Prostate gland (tissue), 2 donors: ENCODE measurements at regions of chr9 and their contacts with region 1.

Region 1: DNA sequence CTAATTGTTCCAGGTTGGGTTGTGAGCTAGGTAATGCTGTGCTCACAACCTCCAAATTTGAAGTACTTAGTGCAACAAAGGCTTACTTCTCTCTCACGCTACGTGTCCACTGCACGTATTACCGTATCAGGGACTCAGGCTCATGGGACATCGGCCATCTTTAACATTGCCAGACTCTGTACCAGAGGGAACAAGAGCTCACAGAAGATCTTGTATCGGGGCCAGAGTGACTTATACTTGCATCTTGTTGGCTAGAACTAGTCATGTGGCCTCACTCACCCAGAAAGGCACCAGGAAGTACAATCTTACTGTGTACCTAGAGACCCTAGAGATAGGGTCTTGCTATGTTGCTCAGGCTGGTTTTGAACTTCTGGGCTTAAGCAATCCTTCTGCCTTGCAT is 81.1 kb upstream of the KLF9 start:
- DNase-seq: no peak
- H3K4me3 ChIP-seq: no peak overlapping the region
- H3K27ac ChIP-seq: no peak overlapping the region
- H3K4me1 ChIP-seq: no peaks in the 10 kb centered on the region
- H3K27me3 ChIP-seq: no peaks in the 10 kb centered on the region
- CTCF ChIP-seq: no peak
- POLR2A ChIP-seq: no peak

Region 2: DNA sequence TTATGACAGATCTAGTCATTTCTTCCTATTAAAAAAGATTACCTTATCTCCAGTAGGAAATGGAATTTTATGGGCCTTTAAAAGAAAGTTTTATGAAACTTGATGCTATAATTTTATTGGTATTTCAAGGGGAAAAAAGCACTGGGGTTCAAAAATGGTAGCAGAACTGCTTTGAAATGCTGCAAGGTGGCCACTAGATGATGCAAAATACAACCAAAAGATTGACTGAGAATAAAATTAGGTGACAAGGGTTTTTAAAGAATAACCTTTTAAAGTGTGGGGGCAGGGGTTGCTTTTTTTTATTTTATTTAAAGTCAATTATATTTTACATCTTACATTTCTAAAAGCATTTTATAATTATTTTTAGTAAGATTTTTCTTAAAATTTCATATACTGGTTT is 142.7 kb before region 1 on chr9:
- intact Hi-C with region 1: loop called (anchors 5 kb)
- DNase-seq: no peak
- H3K4me3 ChIP-seq: no peak overlapping the region
- H3K27ac ChIP-seq: no peak overlapping the region
- H3K4me1 ChIP-seq: no peaks in the 10 kb centered on the region
- H3K27me3 ChIP-seq: no peaks in the 10 kb centered on the region
- CTCF ChIP-seq: peak in 3 of 4 experiments; percentile 51 to 76 (median 63)
- POLR2A ChIP-seq: no peak

Region 3: DNA sequence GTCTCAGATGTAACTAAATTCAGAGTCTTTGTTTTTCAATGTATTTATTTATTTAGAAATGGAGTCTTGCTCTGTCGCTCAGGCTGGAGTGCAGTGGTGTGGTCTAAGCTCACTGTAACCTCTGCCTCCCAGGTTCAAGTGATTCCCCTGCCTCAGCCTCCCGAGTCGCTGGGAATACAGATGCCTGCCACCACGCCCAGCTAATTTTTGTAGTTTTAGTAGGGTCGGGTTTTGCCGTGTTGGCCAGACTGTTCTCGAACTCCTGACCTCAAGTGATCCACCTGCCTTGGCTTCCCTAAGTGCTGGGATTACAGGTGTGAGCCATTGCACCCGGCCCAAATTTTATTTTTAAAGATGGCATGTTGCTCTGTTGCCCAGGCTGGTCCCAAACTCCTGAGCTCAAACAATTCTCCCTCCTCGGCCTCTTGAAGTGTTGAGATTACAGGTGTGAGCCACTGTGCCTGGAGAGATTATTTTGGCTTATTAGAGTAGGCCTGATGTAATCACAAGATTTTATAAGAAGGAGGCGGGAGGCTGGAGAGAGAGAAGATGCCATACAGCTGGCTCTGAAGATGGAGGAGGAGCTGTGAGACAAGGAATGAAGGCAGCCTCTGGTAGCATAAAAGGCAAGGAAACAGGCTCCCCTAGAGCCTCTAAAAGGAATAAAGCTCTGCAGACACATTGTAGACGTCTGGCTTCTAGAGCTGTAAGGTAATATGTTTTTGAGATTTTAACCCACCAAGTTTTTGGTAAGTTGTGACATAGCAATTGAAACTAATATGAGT is 68.2 kb before region 1 on chr9:
- intact Hi-C with region 1: no loop called
- DNase-seq: peak; percentile 56
- H3K4me3 ChIP-seq: no peak overlapping the region
- H3K27ac ChIP-seq: peak overlapping the region in 1 of 2 donors; percentile 48
- H3K4me1 ChIP-seq: no peaks in the 10 kb centered on the region
- H3K27me3 ChIP-seq: no peaks in the 10 kb centered on the region
- CTCF ChIP-seq: peak in 2 of 4 experiments; percentile 18 to 34
- POLR2A ChIP-seq: no peak

Region 4: GRCh38 chr9:70578720-70579119 is 83.2 kb after region 1 on chr9:
- intact Hi-C with region 1: loop called (anchors 5 kb)
- DNase-seq: no peak
- H3K4me3 ChIP-seq: no peak overlapping the region
- H3K27ac ChIP-seq: no peak overlapping the region
- H3K4me1 ChIP-seq: no peaks in the 10 kb centered on the region
- H3K27me3 ChIP-seq: no peaks in the 10 kb centered on the region
- CTCF ChIP-seq: no peak
- POLR2A ChIP-seq: no peak

Region 5: DNA sequence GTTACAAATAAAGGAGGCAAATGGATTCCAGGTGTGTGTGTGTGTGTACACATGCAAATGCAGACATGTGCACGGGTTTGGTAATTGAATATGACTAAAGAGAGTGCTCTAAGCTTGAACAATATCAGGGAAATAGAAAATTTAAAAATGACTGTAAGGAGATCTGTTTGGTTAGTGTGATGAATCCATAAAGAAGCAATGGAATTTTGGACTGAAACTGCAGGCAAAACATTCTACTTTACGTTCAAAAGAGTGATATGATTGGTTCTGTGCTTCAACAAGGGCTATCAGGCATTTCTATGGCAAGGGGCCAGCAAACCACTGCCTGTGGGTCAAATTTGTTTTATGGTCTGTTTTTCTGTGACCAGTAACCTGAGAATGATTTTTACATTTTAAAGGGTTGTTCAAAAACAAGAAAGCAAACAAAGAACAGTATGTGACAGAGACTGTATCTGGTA is 251.8 kb after region 1 on chr9:
- intact Hi-C with region 1: no loop called
- DNase-seq: no peak
- H3K4me3 ChIP-seq: no peak overlapping the region
- H3K27ac ChIP-seq: no peak overlapping the region
- H3K4me1 ChIP-seq: no peaks in the 10 kb centered on the region
- H3K27me3 ChIP-seq: no peaks in the 10 kb centered on the region
- CTCF ChIP-seq: no peak
- POLR2A ChIP-seq: no peak